ENCODE measurements at regions of chr11 and their contacts with region 1.

Region 1: DNA sequence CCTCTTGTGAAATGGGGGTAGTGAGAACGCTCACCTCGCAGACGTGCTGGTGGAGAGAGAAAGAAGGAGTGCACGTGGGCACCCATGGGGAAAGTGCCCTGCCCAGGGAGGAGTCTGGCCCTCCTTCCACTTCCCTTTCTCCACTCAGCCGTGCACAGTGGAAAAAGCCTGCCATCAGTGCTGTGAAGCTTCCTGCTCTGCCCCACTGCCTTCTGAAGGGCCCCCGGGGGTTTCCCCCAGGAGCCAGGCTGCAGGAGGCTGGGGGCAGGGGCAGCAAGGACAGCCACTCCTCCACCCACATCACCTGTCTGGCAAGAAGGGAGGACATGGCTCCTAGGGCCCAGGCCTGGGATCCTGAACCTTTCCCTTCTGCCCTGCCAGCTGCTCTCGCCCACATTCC is 7.6 kb downstream of the TP53I11 start:
- DNase-seq: peak; percentile 83
- H3K4me3 ChIP-seq: peak overlapping the region; percentile 24
- H3K27ac ChIP-seq: peak overlapping the region; percentile 20
- H3K4me1 ChIP-seq: peaks cover 27% of the 10 kb centered on the region
- CTCF ChIP-seq: no peak

Region 2: GRCh38 chr11:44814881-44815592 is 128.1 kb before region 1 on chr11:
- CTCF ChIA-PET with region 1: no interaction called
- POLR2A ChIA-PET with region 1: no interaction called
- intact Hi-C with region 1: no loop called
- DNase-seq: no peak
- H3K4me3 ChIP-seq: no peak overlapping the region
- H3K27ac ChIP-seq: no peak overlapping the region
- H3K4me1 ChIP-seq: no peaks in the 10 kb centered on the region
- CTCF ChIP-seq: no peak

Region 3: GRCh38 chr11:45031912-45032519 is 88.9 kb after region 1 on chr11:
- CTCF ChIA-PET with region 1: no interaction called
- POLR2A ChIA-PET with region 1: no interaction called
- intact Hi-C with region 1: loop called (anchors 5 kb)
- DNase-seq: peak; percentile 93
- H3K4me3 ChIP-seq: no peak overlapping the region
- H3K27ac ChIP-seq: peak overlapping the region; percentile 80
- H3K4me1 ChIP-seq: peaks cover 34% of the 10 kb centered on the region
- CTCF ChIP-seq: no peak

Measured in OCI-LY7 (cell line).